Dorsolateral prefrontal cortex (tissue), 120 donors: ENCODE measurements at regions of chr13 and their contacts with region 1.

Region 1: DNA sequence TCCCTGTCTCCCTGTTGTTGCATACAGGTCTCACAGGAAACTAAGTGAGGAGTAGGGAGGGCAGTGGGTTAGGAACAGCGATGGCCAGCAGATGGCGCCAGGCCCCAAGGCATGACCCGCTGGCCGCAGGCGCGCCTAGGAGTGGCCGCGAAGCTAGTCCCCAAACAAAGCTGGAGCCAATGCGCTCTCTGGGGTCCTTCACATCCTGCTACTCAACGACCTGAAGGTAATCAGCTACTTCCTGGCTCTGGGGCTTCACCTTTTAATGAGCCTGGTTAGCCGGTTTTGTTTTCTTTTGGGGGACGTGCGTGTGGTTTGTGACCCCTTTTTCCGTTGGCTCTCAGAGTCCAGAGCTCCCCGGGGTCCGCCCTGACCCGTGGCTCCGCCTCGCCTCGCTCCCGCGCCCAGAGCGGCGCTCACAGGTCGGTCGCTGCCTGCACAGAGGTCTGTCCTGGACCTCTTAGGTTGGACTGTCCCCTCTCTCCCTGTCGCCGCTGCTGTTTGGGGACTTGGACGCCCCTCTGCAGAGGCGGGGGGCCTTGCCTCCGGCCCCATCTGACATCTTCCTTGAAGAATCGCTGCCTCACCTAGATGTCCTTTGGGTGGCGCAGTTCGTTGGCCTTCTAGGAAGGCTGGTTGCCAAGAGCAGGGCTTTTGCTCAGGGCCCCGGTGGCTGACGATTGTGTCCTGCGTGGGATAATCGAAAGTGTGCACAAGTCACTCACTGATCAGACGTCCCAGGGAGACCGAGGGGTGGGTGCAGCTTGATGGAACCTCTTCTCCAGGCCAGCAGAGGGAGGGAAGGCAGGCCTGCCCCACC is 62.1 kb upstream of the GTF3A start:
- DNase-seq: peak; percentile 81 to 90 (median 86)
- H3K4me3 ChIP-seq: peak overlapping the region; percentile 20 to 77 (median 57)
- H3K27ac ChIP-seq: peak overlapping the region in 1 of 59 donors; percentile 35
- H3K27me3 ChIP-seq: peaks cover 0 to 7% (median 0%) of the 10 kb centered on the region in 45 donors
- CTCF ChIP-seq: peak; percentile 63 to 99 (median 93)

Region 2: GRCh38 chr13:26837997-26838396 is 524.3 kb before region 1 on chr13:
- intact Hi-C with region 1: no loop called
- DNase-seq: no peak
- H3K4me3 ChIP-seq: no peak overlapping the region
- H3K27ac ChIP-seq: no peak overlapping the region
- H3K27me3 ChIP-seq: peaks cover 0 to 4% (median 0%) of the 10 kb centered on the region in 45 donors
- CTCF ChIP-seq: no peak

Region 3: GRCh38 chr13:26985285-26985878 is 376.9 kb before region 1 on chr13:
- intact Hi-C with region 1: loop called (anchors 1 kb)
- DNase-seq: peak in 6 of 10 donors; percentile 52 to 85 (median 72)
- H3K4me3 ChIP-seq: peak overlapping the region in 1 of 59 donors; percentile 12
- H3K27ac ChIP-seq: peak overlapping the region in 2 of 59 donors; percentile 0 to 52
- H3K27me3 ChIP-seq: no peaks in the 10 kb centered on the region
- CTCF ChIP-seq: peak in 55 of 56 donors; percentile 50 to 99 (median 90)

Region 4: GRCh38 chr13:27171827-27172494 is 190.3 kb before region 1 on chr13:
- intact Hi-C with region 1: loop called (anchors 10 kb)
- DNase-seq: peak; percentile 74 to 93 (median 84)
- H3K4me3 ChIP-seq: peak overlapping the region; percentile 62 to 97 (median 84)
- H3K27ac ChIP-seq: peak overlapping the region in 58 of 59 donors; percentile 65 to 98 (median 93)
- H3K27me3 ChIP-seq: no peaks in the 10 kb centered on the region
- CTCF ChIP-seq: peak in 47 of 56 donors; percentile 15 to 69 (median 43)

Region 5: GRCh38 chr13:27270594-27271520 is 91.4 kb before region 1 on chr13 and contains the start of gene RASL11A:
- intact Hi-C with region 1: loop called (anchors 5 kb)
- DNase-seq: peak; percentile 71 to 90 (median 83)
- H3K4me3 ChIP-seq: peak within 1 kb of the TSS; percentile 63 to 96 (median 89)
- H3K27ac ChIP-seq: peak within 1 kb of the TSS; percentile 32 to 97 (median 91)
- H3K27me3 ChIP-seq: no peaks in the 10 kb centered on the region
- CTCF ChIP-seq: peak in 55 of 56 donors; percentile 71 to 97 (median 89)
- total RNA-seq, gene RASL11A: 1.2 to 14.3 (median 5.2) TPM

Region 6: DNA sequence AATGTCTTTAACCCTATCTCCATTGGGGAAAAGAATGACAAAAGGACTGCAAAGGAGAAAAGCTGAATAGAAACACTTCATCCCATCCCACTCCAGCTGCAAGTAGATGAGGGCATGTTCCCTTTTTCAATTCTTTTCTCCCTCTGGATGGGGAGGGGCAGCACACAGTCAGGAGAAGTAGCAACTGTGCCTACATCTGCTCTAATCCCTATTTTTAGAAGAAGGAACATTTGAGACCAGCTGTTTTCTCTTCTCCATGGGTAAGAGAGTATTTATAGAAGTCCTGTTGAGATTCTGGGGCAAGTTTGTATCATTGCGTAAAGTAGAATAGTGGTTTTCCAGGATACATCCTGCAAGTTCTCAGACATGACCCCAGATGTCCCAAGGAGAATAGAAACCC is 52.8 kb after region 1 on chr13:
- intact Hi-C with region 1: no loop called
- DNase-seq: no peak
- H3K4me3 ChIP-seq: no peak overlapping the region
- H3K27ac ChIP-seq: peak overlapping the region in 12 of 59 donors; percentile 3 to 63 (median 40)
- H3K27me3 ChIP-seq: peaks cover 0 to 6% (median 0%) of the 10 kb centered on the region in 45 donors
- CTCF ChIP-seq: no peak

Region 7: DNA sequence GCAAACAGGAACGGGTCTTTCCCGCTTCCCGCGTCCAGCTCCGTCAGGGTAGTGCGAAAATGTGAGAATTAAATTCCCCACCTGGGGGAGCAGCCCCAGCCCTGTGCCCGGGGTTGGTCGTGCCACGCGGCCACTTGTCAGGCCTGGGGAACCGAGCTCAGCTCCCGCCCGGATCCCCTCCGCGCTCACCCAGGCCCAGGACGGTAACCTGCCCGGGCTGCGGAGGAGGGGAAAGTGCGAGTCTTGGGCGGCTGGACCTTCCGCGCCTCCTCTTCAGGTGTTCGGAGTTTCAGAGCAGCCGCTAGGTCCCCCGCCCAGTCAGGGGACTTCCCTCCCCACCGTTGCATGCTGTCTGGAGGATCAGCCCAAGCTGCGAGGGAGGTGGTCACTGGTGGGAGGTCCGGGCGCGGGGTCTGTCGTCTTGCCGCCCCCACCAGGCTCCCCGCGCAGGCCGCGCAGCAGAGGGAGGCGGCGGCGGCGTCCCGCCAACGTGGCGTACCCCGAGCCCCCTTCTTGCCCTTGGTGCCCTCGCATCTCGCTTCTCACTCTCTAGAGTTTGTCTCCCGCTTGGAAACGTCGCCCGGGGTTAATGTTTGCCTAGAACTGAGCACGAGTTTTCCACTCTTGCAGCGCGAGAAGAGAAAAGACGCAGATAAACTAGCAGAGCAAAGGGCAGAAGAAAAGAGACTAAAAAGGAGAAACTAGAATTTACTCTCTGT is 618.2 kb after region 1 on chr13:
- intact Hi-C with region 1: loop called (anchors 2 to 5 kb)
- DNase-seq: peak in 1 of 10 donors; percentile 33
- H3K4me3 ChIP-seq: peak overlapping the region in 2 of 59 donors; percentile 4 to 23
- H3K27ac ChIP-seq: no peak overlapping the region
- H3K27me3 ChIP-seq: peaks cover 35 to 97% (median 86%) of the 10 kb centered on the region in 45 donors
- CTCF ChIP-seq: no peak